PC-9 (cell line): ENCODE measurements at regions of chr4 and their contacts with region 1.

Region 1: DNA sequence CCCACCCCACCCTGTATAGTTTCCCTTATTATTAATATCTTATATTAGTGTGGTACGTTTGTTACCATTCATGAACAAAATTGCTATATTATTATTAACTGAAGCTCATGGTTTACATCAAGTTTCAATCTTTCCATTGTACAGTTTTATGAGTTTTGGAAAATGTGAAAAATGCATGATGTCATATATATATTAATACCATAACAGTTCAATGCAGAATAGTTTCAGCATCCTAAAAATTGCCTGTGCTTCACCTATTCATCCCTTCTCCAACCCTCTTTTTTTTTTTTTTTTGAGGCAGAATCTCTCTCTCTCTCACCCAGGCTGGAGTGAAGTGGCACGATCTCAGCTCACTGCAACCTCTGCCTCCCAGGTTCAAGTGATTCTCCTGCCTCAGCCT is 203.1 kb downstream of the MAD2L1 start:
- DNase-seq: no peak
- H3K4me3 ChIP-seq: no peak overlapping the region
- H3K27ac ChIP-seq: no peak overlapping the region
- H3K4me1 ChIP-seq: no peaks in the 10 kb centered on the region
- H3K27me3 ChIP-seq: no peaks in the 10 kb centered on the region
- CTCF ChIP-seq: no peak

Region 2: DNA sequence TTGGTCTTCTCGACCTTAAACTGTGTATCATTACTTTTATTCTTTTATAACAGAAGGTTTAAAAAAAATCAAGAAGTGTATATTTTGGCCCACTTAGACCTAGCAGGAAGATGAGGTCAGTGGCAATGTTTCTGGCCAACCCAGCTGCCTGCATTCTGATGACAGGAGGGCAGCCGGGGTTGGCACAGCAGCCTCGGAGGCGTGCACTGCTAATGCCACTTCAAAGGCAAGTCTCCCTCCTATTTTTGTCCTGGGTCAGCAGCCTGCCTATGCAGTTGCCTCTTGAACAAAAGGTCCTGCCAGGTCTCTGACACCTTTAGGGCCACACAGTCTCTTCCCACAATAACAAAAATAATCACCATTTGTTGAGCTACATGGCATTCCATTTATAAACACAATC is 817.3 kb before region 1 on chr4:
- CTCF ChIA-PET with region 1: no interaction called
- POLR2A ChIA-PET with region 1: no interaction called
- intact Hi-C with region 1: no loop called
- DNase-seq: no peak
- H3K4me3 ChIP-seq: no peak overlapping the region
- H3K27ac ChIP-seq: no peak overlapping the region
- H3K4me1 ChIP-seq: no peaks in the 10 kb centered on the region
- H3K27me3 ChIP-seq: no peaks in the 10 kb centered on the region
- CTCF ChIP-seq: no peak

Region 3: GRCh38 chr4:120034913-120035312 is 171.4 kb after region 1 on chr4:
- CTCF ChIA-PET with region 1: interaction called, 10 read pairs
- POLR2A ChIA-PET with region 1: no interaction called
- intact Hi-C with region 1: no loop called
- DNase-seq: no peak
- H3K4me3 ChIP-seq: no peak overlapping the region
- H3K27ac ChIP-seq: no peak overlapping the region
- H3K4me1 ChIP-seq: 0 out of 2 replicates have a peak, but pooled peaks cover 6% of the 10 kb centered on the region
- H3K27me3 ChIP-seq: no peaks in the 10 kb centered on the region
- CTCF ChIP-seq: no peak